CD4-positive, alpha-beta T cell (primary cell): ENCODE measurements at regions of chr6 and their contacts with region 1.

Region 1: GRCh38 chr6:26122793-26123674 is 35.8 kb downstream of the HFE start:
- DNase-seq: peak; percentile 75 to 98 (median 92)
- ATAC-seq: peak; percentile 56
- H3K4me3 ChIP-seq: peak overlapping the region; percentile 88
- H3K4me3 Mint-ChIP-seq: peak overlapping the region; percentile 97
- H3K27ac ChIP-seq: peak overlapping the region; percentile 84 to 95
- H3K27ac Mint-ChIP-seq: peak overlapping the region; percentile 98
- H3K4me1 ChIP-seq: peaks cover 23% of the 10 kb centered on the region
- H3K4me1 Mint-ChIP-seq: peaks cover 41% of the 10 kb centered on the region
- H3K27me3 ChIP-seq: no peaks in the 10 kb centered on the region
- H3K27me3 Mint-ChIP-seq: peaks cover 13% of the 10 kb centered on the region
- CTCF ChIP-seq: no peak

Region 2: DNA sequence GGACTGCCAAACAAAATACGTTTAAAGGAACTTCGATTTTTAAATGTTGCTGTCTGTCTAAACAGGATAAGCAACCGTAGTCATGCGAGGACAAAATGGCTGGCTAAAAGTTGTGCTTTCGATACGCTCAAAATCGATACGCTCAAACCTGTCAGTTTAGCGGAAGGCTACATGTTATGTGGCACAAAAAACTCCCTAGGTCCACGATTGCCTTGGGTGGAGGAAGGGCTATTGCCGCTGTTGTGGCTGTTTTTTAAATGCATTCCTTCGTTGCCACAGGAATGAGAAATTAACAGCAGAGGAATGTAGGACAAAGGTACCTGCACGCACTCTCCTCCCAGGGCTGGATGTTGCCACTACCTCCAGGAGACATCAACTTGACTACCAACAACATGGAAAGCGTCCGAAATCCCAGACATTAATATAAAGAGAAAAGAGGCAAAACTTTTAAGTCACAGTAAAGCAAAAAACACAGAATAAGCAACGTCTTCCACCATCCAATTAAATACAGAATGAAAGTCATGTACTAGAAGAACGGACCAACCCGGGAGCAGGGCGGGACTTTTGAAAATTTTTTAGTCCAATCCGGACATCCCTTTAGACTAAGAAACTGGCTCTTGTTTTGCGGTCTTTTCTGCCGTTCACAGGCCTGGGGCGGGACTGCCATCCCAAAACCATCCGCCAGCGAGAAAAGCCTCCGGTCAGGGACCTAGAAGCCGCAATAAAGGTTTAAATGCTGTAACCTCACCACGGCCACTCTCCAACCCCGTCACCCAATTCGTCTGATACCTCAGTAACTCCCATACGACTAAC is 68.0 kb before region 1 on chr6:
- CTCF ChIA-PET with region 1: no interaction called
- POLR2A ChIA-PET with region 1: interaction called, 246 read pairs
- intact Hi-C with region 1: loop called in 1 of 2 experiments (anchors 1 kb)
- DNase-seq: peak; percentile 68 to 97 (median 80)
- ATAC-seq: peak; percentile 71
- H3K4me3 ChIP-seq: peak overlapping the region; percentile 89
- H3K4me3 Mint-ChIP-seq: peak overlapping the region; percentile 97
- H3K27ac ChIP-seq: peak overlapping the region; percentile 81
- H3K27ac Mint-ChIP-seq: peak overlapping the region; percentile 96
- H3K4me1 ChIP-seq: peaks cover 29% of the 10 kb centered on the region
- H3K4me1 Mint-ChIP-seq: peaks cover 28% of the 10 kb centered on the region
- H3K27me3 ChIP-seq: no peaks in the 10 kb centered on the region
- H3K27me3 Mint-ChIP-seq: no peaks in the 10 kb centered on the region
- CTCF ChIP-seq: no peak

Region 3: GRCh38 chr6:26141378-26141904 is 18.4 kb after region 1 on chr6:
- CTCF ChIA-PET with region 1: interaction called, 3 read pairs
- POLR2A ChIA-PET with region 1: interaction called, 59 read pairs
- intact Hi-C with region 1: no loop called
- DNase-seq: no peak
- ATAC-seq: no peak
- H3K4me3 ChIP-seq: no peak overlapping the region
- H3K4me3 Mint-ChIP-seq: no peak overlapping the region
- H3K27ac ChIP-seq: no peak overlapping the region
- H3K27ac Mint-ChIP-seq: no peak overlapping the region
- H3K4me1 ChIP-seq: no peaks in the 10 kb centered on the region
- H3K4me1 Mint-ChIP-seq: peaks cover 5% of the 10 kb centered on the region
- H3K27me3 ChIP-seq: no peaks in the 10 kb centered on the region
- H3K27me3 Mint-ChIP-seq: no peaks in the 10 kb centered on the region
- CTCF ChIP-seq: no peak

Region 4: GRCh38 chr6:26234421-26235296 is 111.6 kb after region 1 on chr6:
- CTCF ChIA-PET with region 1: no interaction called
- POLR2A ChIA-PET with region 1: interaction called, 217 read pairs
- intact Hi-C with region 1: loop called in 1 of 2 experiments (anchors 2 kb)
- DNase-seq: peak; percentile 46 to 96 (median 67)
- ATAC-seq: peak; percentile 73
- H3K4me3 ChIP-seq: peak overlapping the region; percentile 66
- H3K4me3 Mint-ChIP-seq: peak overlapping the region; percentile 100
- H3K27ac ChIP-seq: peak overlapping the region; percentile 78 to 87
- H3K27ac Mint-ChIP-seq: peak overlapping the region; percentile 99
- H3K4me1 ChIP-seq: peaks cover 19% of the 10 kb centered on the region
- H3K4me1 Mint-ChIP-seq: peaks cover 42% of the 10 kb centered on the region
- H3K27me3 ChIP-seq: no peaks in the 10 kb centered on the region
- H3K27me3 Mint-ChIP-seq: peaks cover 8% of the 10 kb centered on the region
- CTCF ChIP-seq: no peak

Region 5: DNA sequence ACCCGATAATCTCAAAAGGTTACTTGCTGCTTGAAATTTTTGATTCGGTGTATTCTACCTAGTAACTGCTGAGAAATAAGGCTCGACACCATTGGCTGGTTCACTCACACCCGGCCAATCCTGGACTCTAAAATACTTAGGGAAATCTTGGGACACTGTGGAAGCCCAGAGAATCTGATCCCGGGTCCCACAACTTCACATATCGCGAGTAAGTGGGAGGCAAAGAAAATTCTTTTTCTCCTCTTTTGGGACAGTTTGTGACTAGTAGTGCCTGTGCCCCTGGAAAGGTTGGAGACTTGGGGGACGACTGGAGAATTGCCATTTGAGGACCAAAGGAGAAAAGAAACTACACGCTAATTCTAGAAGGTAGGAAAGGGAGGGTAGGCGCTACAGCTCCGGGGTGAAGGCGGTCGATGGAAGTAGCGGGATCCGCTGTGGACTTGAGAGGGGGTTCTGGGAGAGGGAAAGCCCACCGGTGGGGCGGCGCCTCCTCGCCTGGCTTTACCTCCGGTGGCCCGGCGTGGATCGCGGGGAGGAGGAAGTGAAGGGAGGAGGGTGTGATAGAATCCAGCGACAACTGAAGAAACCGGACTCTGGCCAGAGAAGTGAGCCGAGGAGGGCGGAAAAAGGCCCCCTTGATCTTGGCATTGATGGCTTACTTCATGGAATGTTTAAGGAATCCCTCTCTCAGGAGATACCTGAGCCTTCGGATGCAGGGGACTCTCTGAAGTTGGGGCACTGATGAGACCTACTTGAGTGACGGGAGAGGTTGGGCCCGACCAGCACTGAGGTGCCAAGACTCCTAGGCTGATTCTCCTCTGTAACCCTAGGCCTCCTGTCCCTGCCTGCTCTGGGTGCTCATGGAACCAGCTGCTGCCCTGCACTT is 298.5 kb after region 1 on chr6:
- CTCF ChIA-PET with region 1: no interaction called
- POLR2A ChIA-PET with region 1: no interaction called
- intact Hi-C with region 1: no loop called
- DNase-seq: peak in 11 of 14 experiments; percentile 10 to 82 (median 29)
- ATAC-seq: peak; percentile 97
- H3K4me3 ChIP-seq: peak overlapping the region; percentile 93
- H3K4me3 Mint-ChIP-seq: no peak overlapping the region
- H3K27ac ChIP-seq: peak overlapping the region; percentile 36 to 40
- H3K27ac Mint-ChIP-seq: no peak overlapping the region
- H3K4me1 ChIP-seq: peaks cover 15% of the 10 kb centered on the region
- H3K4me1 Mint-ChIP-seq: peaks cover 4% of the 10 kb centered on the region
- H3K27me3 ChIP-seq: no peaks in the 10 kb centered on the region
- H3K27me3 Mint-ChIP-seq: no peaks in the 10 kb centered on the region
- CTCF ChIP-seq: no peak

Region 6: GRCh38 chr6:26568601-26569432 is 445.8 kb after region 1 on chr6:
- CTCF ChIA-PET with region 1: interaction called, 3 read pairs
- POLR2A ChIA-PET with region 1: interaction called, 15 read pairs
- intact Hi-C with region 1: no loop called
- DNase-seq: peak; percentile 96 to 100 (median 98)
- ATAC-seq: peak; percentile 74
- H3K4me3 ChIP-seq: peak overlapping the region; percentile 55
- H3K4me3 Mint-ChIP-seq: peak overlapping the region; percentile 97
- H3K27ac ChIP-seq: peak overlapping the region; percentile 37 to 53
- H3K27ac Mint-ChIP-seq: peak overlapping the region; percentile 100
- H3K4me1 ChIP-seq: peaks cover 21% of the 10 kb centered on the region
- H3K4me1 Mint-ChIP-seq: peaks cover 29% of the 10 kb centered on the region
- H3K27me3 ChIP-seq: no peaks in the 10 kb centered on the region
- H3K27me3 Mint-ChIP-seq: peaks cover 16% of the 10 kb centered on the region
- CTCF ChIP-seq: peak; percentile 58

Region 7: GRCh38 chr6:27809939-27810767 is 1687.1 kb after region 1 on chr6:
- CTCF ChIA-PET with region 1: no interaction called
- POLR2A ChIA-PET with region 1: interaction called, 77 read pairs
- intact Hi-C with region 1: loop called in 1 of 2 experiments (anchors 10 kb)
- DNase-seq: peak; percentile 63 to 98 (median 75)
- ATAC-seq: peak; percentile 61
- H3K4me3 ChIP-seq: peak overlapping the region; percentile 64
- H3K4me3 Mint-ChIP-seq: peak overlapping the region; percentile 95
- H3K27ac ChIP-seq: peak overlapping the region; percentile 69 to 81
- H3K27ac Mint-ChIP-seq: peak overlapping the region; percentile 96
- H3K4me1 ChIP-seq: peaks cover 39% of the 10 kb centered on the region
- H3K4me1 Mint-ChIP-seq: peaks cover 68% of the 10 kb centered on the region
- H3K27me3 ChIP-seq: no peaks in the 10 kb centered on the region
- H3K27me3 Mint-ChIP-seq: no peaks in the 10 kb centered on the region
- CTCF ChIP-seq: no peak